Psoas muscle (tissue), 8 donors: ENCODE measurements at regions of chr3 and their contacts with region 1.

Region 1: GRCh38 chr3:126197854-126198584 is 17.6 kb upstream of the ALDH1L1 start:
- DNase-seq: peak; percentile 72 to 80
- ATAC-seq: peak; percentile 97 to 99 (median 98)
- H3K4me3 ChIP-seq: peak overlapping the region; percentile 11
- H3K27ac ChIP-seq: peak overlapping the region; percentile 48
- H3K4me1 ChIP-seq: peaks cover 7% of the 10 kb centered on the region
- H3K27me3 ChIP-seq: no peaks in the 10 kb centered on the region
- CTCF ChIP-seq: peak; percentile 79

Region 2: GRCh38 chr3:125967138-125967537 is 230.9 kb before region 1 on chr3:
- intact Hi-C with region 1: loop called in 1 of 2 experiments (anchors 5 kb)
- DNase-seq: no peak
- ATAC-seq: no peak
- H3K4me3 ChIP-seq: no peak overlapping the region
- H3K27ac ChIP-seq: no peak overlapping the region
- H3K4me1 ChIP-seq: no peaks in the 10 kb centered on the region
- H3K27me3 ChIP-seq: no peaks in the 10 kb centered on the region
- CTCF ChIP-seq: no peak

Region 3: GRCh38 chr3:126160243-126161210 is 37.5 kb before region 1 on chr3:
- intact Hi-C with region 1: loop called in 1 of 2 experiments (anchors 1 kb)
- DNase-seq: no peak
- ATAC-seq: no peak
- H3K4me3 ChIP-seq: no peak overlapping the region
- H3K27ac ChIP-seq: no peak overlapping the region
- H3K4me1 ChIP-seq: no peaks in the 10 kb centered on the region
- H3K27me3 ChIP-seq: no peaks in the 10 kb centered on the region
- CTCF ChIP-seq: no peak

Region 4: GRCh38 chr3:126180477-126181397 is 17.3 kb before region 1 on chr3 and contains the start of gene ALDH1L1:
- intact Hi-C with region 1: loop called in 1 of 2 experiments (anchors 2 kb)
- DNase-seq: peak; percentile 88 to 96
- ATAC-seq: peak; percentile 90 to 95 (median 93)
- H3K4me3 ChIP-seq: peak within 1 kb of the TSS; percentile 82
- H3K27ac ChIP-seq: peak within 1 kb of the TSS; percentile 98
- H3K4me1 ChIP-seq: peaks cover 19% of the 10 kb centered on the region
- H3K27me3 ChIP-seq: peaks cover 0 to 5% (median 0%) of the 10 kb centered on the region in 3 donors
- CTCF ChIP-seq: no peak
- total RNA-seq, gene ALDH1L1: 34.5 to 121 (median 62.7) TPM